Ascending aorta (tissue), 2 donors: ENCODE measurements at regions of chr5 and their contacts with region 1.

Region 1: GRCh38 chr5:78008356-78008967 is 232.3 kb upstream of the TBCA start:
- DNase-seq: no peak
- H3K4me3 ChIP-seq: no peak overlapping the region
- H3K27ac ChIP-seq: no peak overlapping the region
- H3K4me1 ChIP-seq: peaks cover 3 to 5% of the 10 kb centered on the region in 2 donors
- H3K27me3 ChIP-seq: no peaks in the 10 kb centered on the region
- CTCF ChIP-seq: peak in 2 of 3 experiments; percentile 70 to 74

Region 2: GRCh38 chr5:77305956-77306355 is 702.5 kb before region 1 on chr5:
- intact Hi-C with region 1: no loop called
- DNase-seq: peak; percentile 18 to 82
- H3K4me3 ChIP-seq: no peak overlapping the region
- H3K27ac ChIP-seq: peak overlapping the region; percentile 82 to 85
- H3K4me1 ChIP-seq: peaks cover 23 to 31% of the 10 kb centered on the region in 2 donors
- H3K27me3 ChIP-seq: no peaks in the 10 kb centered on the region
- CTCF ChIP-seq: no peak

Region 3: GRCh38 chr5:77337686-77338085 is 670.8 kb before region 1 on chr5:
- intact Hi-C with region 1: no loop called
- DNase-seq: no peak
- H3K4me3 ChIP-seq: no peak overlapping the region
- H3K27ac ChIP-seq: no peak overlapping the region
- H3K4me1 ChIP-seq: peaks cover 0 to 4% of the 10 kb centered on the region in 2 donors
- H3K27me3 ChIP-seq: no peaks in the 10 kb centered on the region
- CTCF ChIP-seq: no peak

Region 4: GRCh38 chr5:77645158-77645994 is 363.1 kb before region 1 on chr5:
- intact Hi-C with region 1: loop called (anchors 10 kb)
- DNase-seq: no peak
- H3K4me3 ChIP-seq: peak overlapping the region; percentile 30 to 43
- H3K27ac ChIP-seq: no peak overlapping the region
- H3K4me1 ChIP-seq: peaks cover 0 to 10% of the 10 kb centered on the region in 2 donors
- H3K27me3 ChIP-seq: peaks cover 34% of the 10 kb centered on the region
- CTCF ChIP-seq: peak in 2 of 3 experiments; percentile 24 to 41

Region 5: DNA sequence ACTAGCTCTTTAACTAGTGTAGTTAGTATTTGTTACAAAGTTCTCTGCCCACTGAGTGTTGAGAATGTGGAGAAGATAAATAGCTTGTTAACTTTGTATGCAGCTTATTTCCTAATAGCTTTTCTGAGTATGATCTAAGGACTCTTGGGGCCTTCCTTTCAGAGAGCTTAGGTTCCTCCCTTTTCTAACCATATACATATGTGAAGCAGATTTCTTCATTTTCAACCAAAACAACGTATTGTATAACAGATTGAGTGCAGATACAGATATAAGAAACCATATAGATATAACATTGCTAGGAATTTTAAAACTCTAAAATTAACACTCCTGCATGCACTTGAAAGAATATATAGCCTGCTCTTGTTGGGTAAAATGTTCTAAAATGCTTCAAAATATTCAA is 422.4 kb after region 1 on chr5:
- intact Hi-C with region 1: no loop called
- DNase-seq: no peak
- H3K4me3 ChIP-seq: no peak overlapping the region
- H3K27ac ChIP-seq: no peak overlapping the region
- H3K4me1 ChIP-seq: no peaks in the 10 kb centered on the region
- H3K27me3 ChIP-seq: no peaks in the 10 kb centered on the region
- CTCF ChIP-seq: no peak